CD4-positive, alpha-beta memory T cell (primary cell): ENCODE measurements at regions of chr1 and their contacts with region 1.

Region 1: GRCh38 chr1:117664314-117664713 is 58.5 kb downstream of the TENT5C start:
- DNase-seq: peak; percentile 84 to 92 (median 89)
- H3K4me3 ChIP-seq: no peak overlapping the region
- H3K4me3 Mint-ChIP-seq: peak overlapping the region in 6 of 8 donors; percentile 29 to 82 (median 64)
- H3K27ac ChIP-seq: peak overlapping the region; percentile 71
- H3K27ac Mint-ChIP-seq: peak overlapping the region; percentile 86 to 99 (median 98)
- H3K4me1 ChIP-seq: peaks cover 77% of the 10 kb centered on the region
- H3K4me1 Mint-ChIP-seq: peaks cover 60 to 89% (median 73%) of the 10 kb centered on the region in 4 donors
- H3K27me3 ChIP-seq: no peaks in the 10 kb centered on the region
- H3K27me3 Mint-ChIP-seq: no peaks in the 10 kb centered on the region

Region 2: DNA sequence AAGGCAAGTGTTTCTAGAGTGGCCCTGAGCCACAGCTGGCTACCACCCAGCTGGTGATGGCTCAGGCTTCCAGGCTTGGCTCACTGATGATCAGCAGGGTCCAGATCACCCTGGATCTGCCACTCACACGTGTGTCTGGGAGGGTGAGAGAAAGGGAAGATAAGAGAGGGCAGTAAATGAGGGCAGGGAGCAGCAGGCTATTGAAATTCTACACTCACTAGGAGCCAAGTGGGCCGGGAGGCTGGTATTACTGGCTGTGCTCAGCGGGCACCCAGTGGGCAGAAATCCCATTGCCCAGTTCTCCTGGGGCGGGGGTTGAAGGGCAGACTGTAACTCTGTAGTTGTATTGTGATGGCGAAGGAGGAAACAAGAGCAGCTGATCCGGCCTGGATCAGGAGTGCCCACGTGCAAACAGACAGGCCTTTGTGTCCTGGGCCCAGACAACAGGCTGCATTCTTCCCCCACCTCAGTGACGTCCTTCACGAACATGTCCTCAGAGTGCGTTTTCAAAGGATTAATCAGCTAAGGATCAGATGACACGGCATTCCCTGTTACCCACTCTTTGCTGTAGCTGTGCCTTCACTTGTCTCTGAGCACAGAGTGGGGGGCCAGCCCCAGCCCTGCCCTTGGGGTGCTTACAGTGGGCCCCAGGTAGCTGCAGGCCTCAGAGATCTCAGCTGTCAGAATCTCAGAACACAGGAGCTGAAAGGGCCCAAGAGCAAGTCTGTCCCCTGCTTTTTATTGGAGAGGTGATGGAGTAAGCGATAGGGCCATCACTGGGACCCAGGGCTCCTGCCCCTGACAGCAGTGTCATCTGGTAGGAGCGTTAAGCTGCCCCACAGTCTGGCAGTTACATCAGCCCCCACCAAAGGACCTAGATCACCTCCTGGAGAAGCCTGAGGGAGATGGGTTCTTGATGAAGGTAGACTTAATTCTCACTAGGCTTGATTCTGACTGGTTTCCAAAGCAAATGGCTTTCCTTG is 1230.7 kb before region 1 on chr1:
- CTCF ChIA-PET with region 1: no interaction called
- POLR2A ChIA-PET with region 1: no interaction called
- intact Hi-C with region 1: loop called (anchors 10 kb)
- DNase-seq: no peak
- H3K4me3 ChIP-seq: no peak overlapping the region
- H3K4me3 Mint-ChIP-seq: no peak overlapping the region
- H3K27ac ChIP-seq: no peak overlapping the region
- H3K27ac Mint-ChIP-seq: no peak overlapping the region
- H3K4me1 ChIP-seq: no peaks in the 10 kb centered on the region
- H3K4me1 Mint-ChIP-seq: no peaks in the 10 kb centered on the region
- H3K27me3 ChIP-seq: no peaks in the 10 kb centered on the region
- H3K27me3 Mint-ChIP-seq: no peaks in the 10 kb centered on the region

Region 3: GRCh38 chr1:117735045-117735992 is 71.0 kb after region 1 on chr1:
- CTCF ChIA-PET with region 1: no interaction called
- POLR2A ChIA-PET with region 1: interaction called, 3 read pairs
- intact Hi-C with region 1: loop called (anchors 2 kb)
- DNase-seq: peak; percentile 39 to 56 (median 52)
- H3K4me3 ChIP-seq: peak overlapping the region; percentile 26 to 44
- H3K4me3 Mint-ChIP-seq: peak overlapping the region; percentile 63 to 95 (median 88)
- H3K27ac ChIP-seq: peak overlapping the region; percentile 45
- H3K27ac Mint-ChIP-seq: peak overlapping the region; percentile 66 to 96 (median 94)
- H3K4me1 ChIP-seq: peaks cover 14% of the 10 kb centered on the region
- H3K4me1 Mint-ChIP-seq: peaks cover 10 to 24% (median 20%) of the 10 kb centered on the region in 4 donors
- H3K27me3 ChIP-seq: no peaks in the 10 kb centered on the region
- H3K27me3 Mint-ChIP-seq: no peaks in the 10 kb centered on the region